ENCODE measurements at regions of chr18 and their contacts with region 1.

Region 1: DNA sequence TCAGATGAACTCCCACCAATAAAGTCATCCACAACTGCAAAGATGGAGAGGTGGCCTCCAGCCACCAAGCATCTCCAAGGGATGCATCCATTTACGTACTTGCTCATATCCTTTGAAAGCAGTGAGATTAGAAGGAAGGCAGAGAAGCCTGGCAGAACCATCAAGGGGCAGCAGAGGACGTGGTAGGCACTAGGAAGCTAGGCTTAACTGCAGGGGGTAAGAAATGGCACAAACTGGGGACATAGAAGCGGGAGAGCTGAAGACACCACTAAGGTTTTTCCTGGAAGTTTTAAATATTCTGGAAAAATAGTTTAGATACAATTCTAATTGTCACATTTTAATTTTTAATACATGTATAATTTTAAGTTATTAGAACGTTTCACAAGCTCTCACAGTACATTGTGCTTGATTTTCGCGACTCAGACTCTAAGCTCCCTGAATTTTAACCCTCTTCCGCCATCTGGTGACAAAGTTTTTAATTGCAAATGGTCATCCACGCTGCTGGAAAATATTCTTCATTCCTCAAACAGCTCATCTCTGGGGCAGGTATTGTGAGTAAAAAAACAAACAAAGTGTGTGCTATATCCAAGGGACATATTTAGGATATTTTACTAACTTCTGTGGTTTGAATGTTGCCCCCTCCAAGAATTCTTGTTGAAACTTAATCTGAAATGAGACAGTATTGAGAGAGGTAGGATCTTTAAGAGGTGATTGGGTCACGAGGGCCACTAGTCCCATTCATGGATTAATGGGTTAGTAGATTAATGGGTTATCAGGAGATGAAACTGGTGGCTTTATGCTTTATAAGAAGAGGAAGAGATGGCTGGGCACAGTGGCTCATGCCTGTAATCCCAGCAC is 1.6 kb upstream of the PSTPIP2 start:
- ATAC-seq: peak; percentile 8 to 52 (median 40)
- H3K4me3 ChIP-seq: no peak overlapping the region
- H3K27ac ChIP-seq: no peak overlapping the region
- H3K4me1 ChIP-seq: no peaks in the 10 kb centered on the region

Region 2: DNA sequence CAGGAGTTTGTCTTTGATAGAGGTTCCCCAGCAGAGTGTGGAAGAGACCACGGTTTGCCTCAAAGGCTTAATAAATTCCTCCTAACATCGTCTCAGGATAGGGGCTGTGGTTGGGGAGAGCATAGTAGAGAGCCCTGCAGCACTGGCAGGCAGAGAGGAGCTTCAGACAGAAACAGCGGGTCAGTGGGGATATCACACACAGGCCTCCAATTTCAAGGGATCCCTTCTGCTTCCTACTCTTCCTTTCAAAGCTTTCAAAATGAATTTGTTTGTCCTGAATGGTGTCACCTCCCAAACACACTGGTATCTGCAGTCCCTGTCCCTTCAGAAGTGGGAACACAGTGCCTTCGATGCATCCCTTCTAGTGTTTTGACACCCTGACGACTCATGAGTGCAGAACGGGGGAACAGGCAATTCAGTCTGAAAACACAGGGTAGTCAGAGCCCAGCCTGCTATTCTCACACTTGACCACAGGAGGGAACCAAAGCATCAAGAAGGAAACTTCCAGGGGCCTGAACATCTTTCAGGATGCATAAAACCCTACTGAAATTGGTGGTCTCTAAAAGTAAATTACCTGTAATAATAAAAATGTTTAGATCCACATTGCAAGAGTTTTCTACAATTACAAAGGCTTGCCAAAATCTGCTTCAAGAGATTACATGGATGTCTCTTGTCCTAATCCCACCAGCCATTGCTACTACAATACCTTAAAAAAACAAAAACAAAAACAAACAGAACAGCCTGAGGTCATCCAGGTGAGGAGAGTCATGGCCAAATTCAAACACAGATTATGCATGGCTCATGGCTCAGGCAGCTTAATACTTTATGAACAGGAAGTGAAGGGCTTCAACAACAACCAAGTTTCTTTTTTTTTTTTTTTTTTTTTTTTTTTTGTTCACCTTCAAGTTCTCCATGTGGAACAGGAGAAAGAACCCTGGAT is 408.6 kb before region 1 on chr18:
- in situ Hi-C with region 1: loop called in 2 of 9 experiments (anchors 25 kb)
- ATAC-seq: peak; percentile 52 to 87 (median 72)
- H3K4me3 ChIP-seq: no peak overlapping the region
- H3K27ac ChIP-seq: no peak overlapping the region
- H3K4me1 ChIP-seq: no peaks in the 10 kb centered on the region